Activated B cell treated with CpG ODN at 0.5 μM for 24 hours (primary cell): ENCODE measurements at regions of chr9 and their contacts with region 1.

Region 1: GRCh38 chr9:98056269-98057137 is at the start of gene NANS:
- DNase-seq: peak; percentile 87
- ATAC-seq: peak; percentile 97
- H3K4me3 Mint-ChIP-seq: peak within 1 kb of the TSS; percentile 97
- H3K27ac Mint-ChIP-seq: peak within 1 kb of the TSS; percentile 94
- H3K4me1 Mint-ChIP-seq: peaks cover 14% of the 10 kb centered on the region
- H3K27me3 Mint-ChIP-seq: no peaks in the 10 kb centered on the region
- CTCF ChIP-seq: no peak
- total RNA-seq, gene NANS: 21.6 and 21.8 TPM in 2 replicates

Region 2: DNA sequence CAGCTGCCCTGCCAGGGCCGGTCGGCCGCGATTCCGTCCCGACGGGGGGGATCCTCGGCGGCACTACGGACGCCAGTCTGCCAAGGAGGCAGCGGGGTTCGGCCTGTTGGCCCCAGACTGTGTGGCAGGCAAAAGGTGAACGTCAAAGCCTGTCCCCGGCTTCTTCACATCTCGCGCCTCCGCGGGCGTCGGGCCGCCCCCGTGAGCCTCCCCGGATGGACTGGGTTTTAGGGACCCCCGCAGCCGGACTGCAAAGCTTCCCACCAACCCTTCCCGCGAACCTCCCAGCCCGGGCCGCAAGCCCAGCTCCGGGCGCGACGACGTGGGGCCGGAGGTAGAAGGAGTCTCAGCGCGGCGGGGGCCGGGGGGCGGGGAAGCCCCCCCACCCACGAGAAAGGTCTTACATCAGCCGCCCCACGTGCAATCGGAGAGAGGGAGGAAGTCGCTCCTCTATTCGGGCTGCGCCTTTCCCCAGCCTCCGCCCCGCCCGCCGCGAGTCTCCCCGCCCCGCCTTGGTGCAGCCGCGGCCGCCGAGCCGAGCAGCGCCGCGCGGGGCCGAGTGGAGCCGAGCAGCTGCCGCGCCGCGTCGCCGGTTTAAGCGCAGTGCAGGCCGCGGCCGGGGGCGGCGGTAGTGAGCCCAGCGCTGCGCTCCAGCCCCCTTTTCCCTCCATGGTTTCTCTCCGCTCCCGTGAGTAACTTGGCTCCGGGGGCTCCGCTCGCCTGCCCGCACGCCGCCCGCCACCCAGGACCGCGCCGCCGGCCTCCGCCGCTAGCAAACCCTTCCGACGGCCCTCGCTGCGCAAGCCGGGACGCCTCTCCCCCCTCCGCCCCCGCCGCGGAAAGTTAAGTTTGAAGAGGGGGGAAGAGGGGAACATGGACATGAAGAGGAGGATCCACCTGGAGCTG is 73.6 kb before region 1 on chr9 and contains the start of gene ANP32B:
- CTCF ChIA-PET with region 1: no interaction called
- POLR2A ChIA-PET with region 1: interaction called, 32 read pairs
- intact Hi-C with region 1: loop called (anchors 1 kb)
- DNase-seq: peak; percentile 95
- ATAC-seq: peak; percentile 80
- H3K4me3 Mint-ChIP-seq: peak within 1 kb of the TSS; percentile 86
- H3K27ac Mint-ChIP-seq: peak within 1 kb of the TSS; percentile 92
- H3K4me1 Mint-ChIP-seq: peaks cover 38% of the 10 kb centered on the region
- H3K27me3 Mint-ChIP-seq: no peaks in the 10 kb centered on the region
- CTCF ChIP-seq: no peak
- total RNA-seq, gene ANP32B: 162 and 173 TPM in 2 replicates

Region 3: DNA sequence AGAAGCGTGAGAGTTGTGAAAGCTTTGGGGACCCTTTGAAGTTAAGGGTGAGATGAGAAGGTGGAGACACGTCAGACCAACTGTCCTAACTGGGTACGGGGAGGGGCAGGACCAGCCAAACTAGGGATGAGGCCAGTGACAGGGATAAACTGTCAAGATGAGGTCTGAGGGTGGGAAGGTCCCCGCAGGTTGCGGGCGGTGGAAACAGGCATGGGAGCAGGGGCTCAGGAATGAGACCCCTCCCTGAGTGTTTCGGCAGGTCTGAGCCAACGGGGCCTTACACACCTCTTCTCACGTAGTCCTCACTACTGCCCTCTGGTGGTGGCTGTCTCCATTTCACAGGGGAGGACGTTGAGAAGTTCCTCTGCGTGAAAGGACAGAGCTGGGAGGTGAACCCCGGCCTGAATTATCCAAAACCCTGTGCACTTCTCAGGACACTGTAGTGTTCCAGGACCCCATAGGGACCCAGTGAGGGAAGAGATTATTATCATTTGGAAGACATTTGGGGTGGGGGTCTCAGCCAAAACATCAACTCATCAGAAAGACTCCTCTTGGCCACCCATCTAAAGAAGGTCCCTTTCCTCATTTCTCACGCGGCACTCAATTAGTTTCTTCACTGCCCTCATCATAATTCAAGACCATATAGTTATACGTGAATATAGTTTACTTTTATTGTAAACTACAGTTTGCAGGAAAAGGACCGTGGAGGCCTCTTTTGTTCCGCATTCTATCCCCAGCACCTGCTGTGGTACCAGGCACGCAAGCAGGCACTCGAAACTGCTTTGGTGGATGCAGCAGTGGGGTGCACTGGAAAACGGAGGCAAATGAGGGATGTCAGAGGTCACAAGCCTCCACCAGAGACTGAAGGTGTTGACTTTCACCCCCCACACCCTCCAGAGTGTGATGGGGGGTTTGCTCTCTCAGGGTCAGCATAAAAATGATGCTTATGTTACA is 21.6 kb before region 1 on chr9:
- CTCF ChIA-PET with region 1: interaction called, 8 read pairs
- POLR2A ChIA-PET with region 1: interaction called, 9 read pairs
- intact Hi-C with region 1: loop called (anchors 1 kb)
- DNase-seq: peak; percentile 73
- ATAC-seq: peak; percentile 89
- H3K4me3 Mint-ChIP-seq: peak overlapping the region; percentile 1
- H3K27ac Mint-ChIP-seq: peak overlapping the region; percentile 36
- H3K4me1 Mint-ChIP-seq: peaks cover 47% of the 10 kb centered on the region
- H3K27me3 Mint-ChIP-seq: no peaks in the 10 kb centered on the region
- CTCF ChIP-seq: no peak

Region 4: GRCh38 chr9:98074115-98074990 is 17.9 kb after region 1 on chr9:
- CTCF ChIA-PET with region 1: no interaction called
- POLR2A ChIA-PET with region 1: interaction called, 10 read pairs
- intact Hi-C with region 1: no loop called
- DNase-seq: peak; percentile 58
- ATAC-seq: peak; percentile 61
- H3K4me3 Mint-ChIP-seq: no peak overlapping the region
- H3K27ac Mint-ChIP-seq: peak overlapping the region; percentile 24
- H3K4me1 Mint-ChIP-seq: peaks cover 6% of the 10 kb centered on the region
- H3K27me3 Mint-ChIP-seq: no peaks in the 10 kb centered on the region
- CTCF ChIP-seq: peak; percentile 91

Region 5: GRCh38 chr9:98192503-98193335 is 136.2 kb after region 1 on chr9 and contains the start of gene CORO2A:
- CTCF ChIA-PET with region 1: no interaction called
- POLR2A ChIA-PET with region 1: interaction called, 3 read pairs
- intact Hi-C with region 1: loop called (anchors 2 kb)
- DNase-seq: peak; percentile 70
- ATAC-seq: peak; percentile 91
- H3K4me3 Mint-ChIP-seq: peak within 1 kb of the TSS; percentile 88
- H3K27ac Mint-ChIP-seq: no peak within 1 kb of the TSS
- H3K4me1 Mint-ChIP-seq: peaks cover 5% of the 10 kb centered on the region
- H3K27me3 Mint-ChIP-seq: no peaks in the 10 kb centered on the region
- CTCF ChIP-seq: no peak
- total RNA-seq, gene CORO2A: 0.59 and 0.78 TPM in 2 replicates